Heart left ventricle (tissue), 16 donors: ENCODE measurements at regions of chr9 and their contacts with region 1.

Region 1: DNA sequence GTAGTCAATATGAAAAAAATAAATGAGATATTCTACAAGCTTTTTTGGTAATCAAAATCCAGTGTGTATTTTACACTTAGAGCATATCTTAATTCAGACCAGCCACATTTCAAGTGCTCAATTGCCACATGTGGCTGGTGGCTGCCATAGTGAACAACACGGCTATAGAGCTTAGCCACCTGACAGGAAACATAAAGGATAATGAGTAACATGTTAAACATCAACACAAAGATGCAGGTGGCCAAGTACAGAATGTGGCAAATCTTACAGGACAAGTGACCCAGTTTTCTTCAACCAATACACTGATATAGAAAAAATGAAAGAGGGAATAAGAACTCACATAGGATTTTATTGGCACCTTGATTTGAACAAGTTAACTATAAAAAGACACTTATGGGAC is 61.4 kb downstream of the KIF24 start:
- DNase-seq: no peak
- ATAC-seq: no peak
- H3K4me3 ChIP-seq: no peak overlapping the region
- H3K27ac ChIP-seq: no peak overlapping the region
- H3K4me1 ChIP-seq: peaks cover 0 to 8% (median 0%) of the 10 kb centered on the region in 12 donors
- H3K27me3 ChIP-seq: no peaks in the 10 kb centered on the region
- CTCF ChIP-seq: no peak
- POLR2A ChIP-seq: no peak

Region 2: GRCh38 chr9:34310205-34310604 is 42.5 kb after region 1 on chr9:
- intact Hi-C with region 1: loop called in 1 of 10 experiments (anchors 10 kb)
- DNase-seq: no peak
- ATAC-seq: no peak
- H3K4me3 ChIP-seq: no peak overlapping the region
- H3K27ac ChIP-seq: no peak overlapping the region
- H3K4me1 ChIP-seq: no peaks in the 10 kb centered on the region
- H3K27me3 ChIP-seq: no peaks in the 10 kb centered on the region
- CTCF ChIP-seq: no peak
- POLR2A ChIP-seq: no peak